CD8-positive, alpha-beta T cell (primary cell): ENCODE measurements at regions of chr16 and their contacts with region 1.

Region 1: GRCh38 chr16:27455700-27456099 is 53.7 kb downstream of the IL21R start:
- DNase-seq: peak in 1 of 9 experiments; percentile 64
- ATAC-seq: peak; percentile 30
- H3K4me3 ChIP-seq: no peak overlapping the region
- H3K4me3 Mint-ChIP-seq: peak overlapping the region; percentile 27
- H3K27ac ChIP-seq: peak overlapping the region in 1 of 2 experiments; percentile 39
- H3K27ac Mint-ChIP-seq: peak overlapping the region; percentile 83
- H3K4me1 ChIP-seq: peaks cover 53% of the 10 kb centered on the region
- H3K4me1 Mint-ChIP-seq: peaks cover 74% of the 10 kb centered on the region
- H3K27me3 ChIP-seq: no peaks in the 10 kb centered on the region
- H3K27me3 Mint-ChIP-seq: no peaks in the 10 kb centered on the region
- CTCF ChIP-seq: no peak

Region 2: GRCh38 chr16:27318392-27319226 is 137.1 kb before region 1 on chr16:
- CTCF ChIA-PET with region 1: interaction called, 7 read pairs
- POLR2A ChIA-PET with region 1: no interaction called
- intact Hi-C with region 1: loop called (anchors 2 to 5 kb)
- DNase-seq: peak; percentile 10 to 76 (median 61)
- ATAC-seq: peak; percentile 67
- H3K4me3 ChIP-seq: peak overlapping the region; percentile 12 to 25
- H3K4me3 Mint-ChIP-seq: peak overlapping the region; percentile 74
- H3K27ac ChIP-seq: peak overlapping the region; percentile 28 to 87
- H3K27ac Mint-ChIP-seq: peak overlapping the region; percentile 98
- H3K4me1 ChIP-seq: peaks cover 75% of the 10 kb centered on the region
- H3K4me1 Mint-ChIP-seq: peaks cover 73% of the 10 kb centered on the region
- H3K27me3 ChIP-seq: no peaks in the 10 kb centered on the region
- H3K27me3 Mint-ChIP-seq: no peaks in the 10 kb centered on the region
- CTCF ChIP-seq: no peak